GM10248 (cell line): ENCODE measurements at regions of chr13 and their contacts with region 1.

Region 1: DNA sequence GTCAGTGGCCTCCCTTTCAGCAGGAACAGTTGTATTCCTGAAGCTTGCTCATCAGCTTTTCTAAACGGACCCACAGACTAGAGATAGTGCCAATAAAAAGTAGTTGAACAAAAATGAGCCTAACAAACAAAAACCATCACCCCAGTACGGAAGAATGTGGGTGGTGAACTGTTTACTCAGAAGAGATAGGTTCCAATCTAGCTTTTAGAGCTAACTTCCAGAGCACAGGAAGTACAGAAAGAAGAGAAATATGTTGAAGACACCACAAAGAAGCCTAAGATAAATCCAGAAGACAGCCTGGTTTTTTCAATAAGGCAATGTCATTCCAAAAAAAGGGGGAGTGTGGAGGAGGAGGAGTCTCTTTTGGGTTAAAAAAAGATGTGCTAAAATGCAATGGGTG is 2.8 kb upstream of the LMO7 start:
- DNase-seq: no peak
- CTCF ChIP-seq: no peak

Region 2: GRCh38 chr13:75512253-75512652 is 121.0 kb before region 1 on chr13:
- CTCF ChIA-PET with region 1: no interaction called
- POLR2A ChIA-PET with region 1: no interaction called
- DNase-seq: peak; percentile 68
- CTCF ChIP-seq: no peak

Region 3: DNA sequence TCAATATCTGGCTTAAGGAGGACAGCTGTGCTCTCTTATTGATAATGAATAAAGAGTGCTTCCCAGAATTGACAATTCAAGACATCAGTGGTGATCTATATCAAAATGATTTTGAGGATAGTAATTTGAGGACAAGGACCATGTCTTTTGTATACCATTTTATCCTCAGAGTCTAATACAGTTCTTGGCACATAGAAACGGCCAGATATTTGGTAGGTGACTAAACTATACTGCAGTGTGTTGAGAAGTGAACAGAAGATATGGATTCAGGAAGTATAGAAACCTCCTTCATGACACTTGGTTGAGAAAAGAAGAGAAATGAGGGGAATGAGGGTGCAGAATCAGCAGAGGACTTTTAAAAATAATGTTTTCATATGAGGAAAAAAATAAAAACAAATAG is 13.3 kb before region 1 on chr13:
- CTCF ChIA-PET with region 1: interaction called, 14 read pairs
- POLR2A ChIA-PET with region 1: no interaction called
- DNase-seq: no peak
- CTCF ChIP-seq: no peak